Activated T-helper 2 cell treated with anti-CD3 and anti-CD28 coated beads, Interferon-gamma antibody, Interleukin-2, Interleukin-4, amounts not matched to agents 10 μg/mL and 5 μg/mL and 100 μg/mL, durations not matched to agents 14 hours and 24 hours and 36 hours (primary cell): ENCODE measurements at regions of chr12 and their contacts with region 1.

Region 1: DNA sequence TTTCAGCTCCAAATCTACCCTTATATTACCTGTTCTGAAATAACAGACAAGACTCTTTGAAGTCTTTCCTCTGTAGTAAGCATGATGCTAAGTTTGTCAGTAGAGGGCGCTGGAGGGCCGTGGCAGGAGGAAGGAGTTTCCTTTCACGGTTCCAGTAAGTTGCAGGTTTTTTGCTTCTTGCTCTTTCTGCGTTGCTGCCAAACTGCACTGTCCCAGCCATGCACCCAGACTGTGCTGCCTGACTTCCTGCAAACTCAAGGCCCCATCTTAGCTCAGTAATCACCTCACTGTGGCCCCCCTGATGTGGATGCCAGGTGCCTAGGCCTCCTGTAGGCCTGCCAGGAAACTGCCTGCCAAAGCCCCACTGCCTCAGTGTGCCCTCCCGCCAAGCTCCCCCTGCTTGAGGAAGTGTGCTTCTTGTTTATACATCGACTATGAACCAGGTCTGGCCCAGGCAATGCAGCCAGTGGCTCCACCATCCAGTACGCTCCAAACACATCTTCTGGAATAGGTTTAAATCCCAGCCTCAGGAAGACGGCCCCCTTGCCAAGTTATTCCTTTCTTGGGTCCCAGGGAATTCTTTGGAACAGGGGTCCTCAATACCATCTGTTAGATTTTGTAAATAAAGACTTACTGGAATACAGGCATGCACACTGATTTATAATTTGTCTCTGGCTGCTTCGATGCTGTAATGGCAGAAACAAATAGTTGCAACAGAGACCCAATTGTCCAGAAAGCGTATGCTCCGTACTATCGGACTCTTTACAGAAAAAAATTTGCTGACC is 193.7 kb upstream of the LRIG3 start:
- DNase-seq: peak; percentile 43
- H3K4me3 Mint-ChIP-seq: no peak overlapping the region
- H3K27ac Mint-ChIP-seq: no peak overlapping the region
- H3K4me1 Mint-ChIP-seq: no peaks in the 10 kb centered on the region
- H3K27me3 Mint-ChIP-seq: no peaks in the 10 kb centered on the region

Region 2: GRCh38 chr12:58888131-58888783 is 225.8 kb before region 1 on chr12:
- intact Hi-C with region 1: no loop called
- DNase-seq: no peak
- H3K4me3 Mint-ChIP-seq: no peak overlapping the region
- H3K27ac Mint-ChIP-seq: no peak overlapping the region
- H3K4me1 Mint-ChIP-seq: no peaks in the 10 kb centered on the region
- H3K27me3 Mint-ChIP-seq: no peaks in the 10 kb centered on the region

Region 3: DNA sequence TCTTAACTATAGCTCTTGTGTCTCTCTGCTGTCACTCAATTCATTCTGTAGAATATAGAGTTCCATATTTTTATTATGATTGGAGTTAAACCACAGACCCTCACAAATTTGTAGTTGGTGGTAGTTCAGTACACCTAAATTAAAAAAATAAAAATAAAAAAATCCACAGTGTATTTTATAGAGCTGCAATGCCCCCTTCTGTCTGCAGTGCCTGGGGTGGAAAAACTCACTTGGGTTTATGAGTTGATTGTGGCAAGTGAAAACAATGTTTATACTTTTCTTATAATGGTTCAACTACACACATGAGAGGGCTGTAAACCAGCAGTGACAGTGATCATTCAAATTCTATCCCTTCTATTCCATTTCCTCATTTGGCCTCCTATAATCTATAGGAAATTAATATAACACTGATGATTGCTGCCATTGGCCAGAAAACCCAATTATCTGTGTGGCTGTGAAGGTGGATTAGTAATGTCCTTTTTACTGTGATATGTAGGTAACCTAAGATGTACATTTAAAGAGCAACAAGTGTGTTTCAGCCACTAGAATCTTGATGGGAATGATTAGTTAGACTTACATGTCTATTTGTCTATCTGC is 26.8 kb before region 1 on chr12:
- intact Hi-C with region 1: no loop called
- DNase-seq: no peak
- H3K4me3 Mint-ChIP-seq: no peak overlapping the region
- H3K27ac Mint-ChIP-seq: no peak overlapping the region
- H3K4me1 Mint-ChIP-seq: no peaks in the 10 kb centered on the region
- H3K27me3 Mint-ChIP-seq: no peaks in the 10 kb centered on the region

Region 4: DNA sequence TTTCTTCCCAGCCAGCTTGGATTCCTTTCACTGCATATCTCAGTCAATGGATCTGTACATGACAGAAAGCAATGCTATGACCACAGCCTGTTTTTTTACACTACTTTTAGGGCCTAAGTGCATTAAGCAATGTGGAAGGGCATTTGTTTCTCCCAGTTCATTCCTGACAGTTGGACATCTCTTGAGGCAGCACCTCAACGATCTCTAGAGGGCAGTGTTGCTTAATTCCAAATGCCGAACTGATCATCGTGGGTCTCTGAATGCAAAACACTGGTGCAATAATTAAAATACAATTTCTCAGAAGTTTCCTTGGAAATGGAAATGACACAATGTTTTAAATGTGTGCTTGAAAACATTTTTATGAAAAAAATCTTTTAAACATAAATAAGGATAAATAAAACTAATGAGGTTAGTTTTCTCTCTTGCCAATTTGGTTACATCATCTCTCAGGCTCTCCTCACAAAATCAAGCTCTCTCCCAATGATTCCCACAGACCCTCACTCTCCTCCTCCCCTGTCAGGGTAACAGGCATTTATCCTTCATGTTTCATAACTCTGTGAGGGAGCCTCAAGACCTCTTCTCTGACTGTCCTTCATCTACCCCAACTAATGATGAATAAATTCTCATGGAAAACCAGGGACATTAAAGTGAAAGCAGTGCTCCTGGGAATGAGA is 289.4 kb after region 1 on chr12:
- intact Hi-C with region 1: no loop called
- DNase-seq: no peak
- H3K4me3 Mint-ChIP-seq: no peak overlapping the region
- H3K27ac Mint-ChIP-seq: no peak overlapping the region
- H3K4me1 Mint-ChIP-seq: peaks cover 18% of the 10 kb centered on the region
- H3K27me3 Mint-ChIP-seq: peaks cover 10% of the 10 kb centered on the region

Region 5: DNA sequence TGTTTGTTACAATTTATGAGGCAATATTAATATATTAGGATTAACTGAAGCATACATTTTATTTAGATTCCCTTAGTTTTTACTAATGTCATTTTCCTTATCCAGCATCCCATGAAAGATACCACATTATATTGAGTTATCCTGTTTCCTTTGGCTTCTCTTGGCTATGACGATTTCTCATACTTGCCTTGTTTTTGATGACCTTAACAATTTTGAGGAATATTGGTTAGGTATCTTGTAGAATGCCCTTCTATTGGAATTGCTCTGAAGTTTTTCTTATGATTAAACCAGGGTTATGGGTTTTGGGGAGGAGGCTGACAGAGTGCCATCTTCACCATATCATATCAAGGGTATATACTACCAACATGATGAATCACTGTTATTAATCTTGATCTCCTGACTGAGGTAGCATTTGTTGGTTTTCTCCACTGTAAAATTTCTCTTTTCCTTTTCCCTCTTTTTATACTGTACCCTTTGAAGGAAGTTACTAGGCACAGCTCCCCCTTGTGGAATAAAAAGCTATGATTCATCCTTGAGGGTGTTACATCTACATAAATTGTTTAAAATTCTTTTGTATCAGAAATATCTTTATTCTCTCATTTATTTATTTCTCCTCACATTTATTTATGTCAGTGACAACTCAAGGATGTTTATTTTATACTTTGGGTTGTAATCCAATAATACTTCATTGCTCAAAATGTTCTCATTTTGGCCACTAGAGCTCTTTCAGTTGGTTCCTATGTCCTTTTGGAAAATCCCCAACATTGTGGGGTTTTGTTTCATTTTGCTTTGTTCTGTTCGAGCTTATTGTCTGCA is 720.8 kb after region 1 on chr12:
- intact Hi-C with region 1: loop called (anchors 10 kb)
- DNase-seq: no peak
- H3K4me3 Mint-ChIP-seq: no peak overlapping the region
- H3K27ac Mint-ChIP-seq: no peak overlapping the region
- H3K4me1 Mint-ChIP-seq: no peaks in the 10 kb centered on the region
- H3K27me3 Mint-ChIP-seq: peaks cover 4% of the 10 kb centered on the region